ENCODE measurements at regions of chr13 and their contacts with region 1.

Region 1: GRCh38 chr13:97359181-97360057 is 74.5 kb upstream of the RAP2A start:
- DNase-seq: peak; percentile 87
- H3K4me3 Mint-ChIP-seq: no peak overlapping the region
- H3K27ac Mint-ChIP-seq: peak overlapping the region; percentile 49
- H3K4me1 Mint-ChIP-seq: no peaks in the 10 kb centered on the region
- H3K27me3 Mint-ChIP-seq: no peaks in the 10 kb centered on the region
- CTCF ChIP-seq: peak; percentile 96

Region 2: DNA sequence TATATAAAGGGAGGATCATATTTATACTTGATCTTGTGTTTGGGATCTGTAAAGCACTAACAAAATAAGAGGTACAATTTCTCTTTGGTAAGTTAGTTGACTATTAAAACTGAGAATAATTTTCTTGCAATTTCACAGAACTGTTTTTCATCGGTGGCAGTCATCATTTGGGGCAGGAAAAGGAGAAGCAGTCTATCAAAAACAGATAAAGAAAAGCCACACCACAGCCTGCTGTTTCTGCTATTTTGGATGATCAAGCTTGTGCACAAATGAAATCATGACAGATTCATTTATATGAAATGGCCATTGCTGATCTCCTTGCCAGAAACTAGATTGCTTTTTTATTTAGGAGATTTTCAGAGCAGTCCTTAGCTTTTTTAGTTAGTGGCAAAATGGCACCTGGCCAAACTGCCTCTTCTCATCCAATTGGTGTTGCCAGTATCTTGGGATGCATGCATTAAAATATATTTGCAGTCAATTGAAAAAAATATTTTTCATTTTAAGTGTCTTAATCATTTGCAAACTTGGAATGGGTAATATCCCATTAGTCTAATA is 943.5 kb before region 1 on chr13:
- CTCF ChIA-PET with region 1: no interaction called
- POLR2A ChIA-PET with region 1: no interaction called
- intact Hi-C with region 1: no loop called
- DNase-seq: no peak
- H3K4me3 Mint-ChIP-seq: no peak overlapping the region
- H3K27ac Mint-ChIP-seq: no peak overlapping the region
- H3K4me1 Mint-ChIP-seq: no peaks in the 10 kb centered on the region
- H3K27me3 Mint-ChIP-seq: no peaks in the 10 kb centered on the region
- CTCF ChIP-seq: no peak

Region 3: GRCh38 chr13:97030705-97031452 is 328.5 kb before region 1 on chr13:
- CTCF ChIA-PET with region 1: interaction called, 3 read pairs
- POLR2A ChIA-PET with region 1: no interaction called
- intact Hi-C with region 1: loop called (anchors 1 kb)
- DNase-seq: peak; percentile 51
- H3K4me3 Mint-ChIP-seq: no peak overlapping the region
- H3K27ac Mint-ChIP-seq: no peak overlapping the region
- H3K4me1 Mint-ChIP-seq: peaks cover 5% of the 10 kb centered on the region
- H3K27me3 Mint-ChIP-seq: no peaks in the 10 kb centered on the region
- CTCF ChIP-seq: peak; percentile 38

Region 4: GRCh38 chr13:97141564-97142005 is 217.8 kb before region 1 on chr13:
- CTCF ChIA-PET with region 1: interaction called, 10 read pairs
- POLR2A ChIA-PET with region 1: no interaction called
- intact Hi-C with region 1: no loop called
- DNase-seq: peak; percentile 96
- H3K4me3 Mint-ChIP-seq: no peak overlapping the region
- H3K27ac Mint-ChIP-seq: peak overlapping the region; percentile 18
- H3K4me1 Mint-ChIP-seq: peaks cover 8% of the 10 kb centered on the region
- H3K27me3 Mint-ChIP-seq: peaks cover under 1% of the 10 kb centered on the region
- CTCF ChIP-seq: no peak

Region 5: GRCh38 chr13:97284558-97284957 is 74.9 kb before region 1 on chr13:
- CTCF ChIA-PET with region 1: no interaction called
- POLR2A ChIA-PET with region 1: no interaction called
- intact Hi-C with region 1: no loop called
- DNase-seq: peak; percentile 44
- H3K4me3 Mint-ChIP-seq: no peak overlapping the region
- H3K27ac Mint-ChIP-seq: no peak overlapping the region
- H3K4me1 Mint-ChIP-seq: peaks cover 48% of the 10 kb centered on the region
- H3K27me3 Mint-ChIP-seq: no peaks in the 10 kb centered on the region
- CTCF ChIP-seq: no peak

Region 6: DNA sequence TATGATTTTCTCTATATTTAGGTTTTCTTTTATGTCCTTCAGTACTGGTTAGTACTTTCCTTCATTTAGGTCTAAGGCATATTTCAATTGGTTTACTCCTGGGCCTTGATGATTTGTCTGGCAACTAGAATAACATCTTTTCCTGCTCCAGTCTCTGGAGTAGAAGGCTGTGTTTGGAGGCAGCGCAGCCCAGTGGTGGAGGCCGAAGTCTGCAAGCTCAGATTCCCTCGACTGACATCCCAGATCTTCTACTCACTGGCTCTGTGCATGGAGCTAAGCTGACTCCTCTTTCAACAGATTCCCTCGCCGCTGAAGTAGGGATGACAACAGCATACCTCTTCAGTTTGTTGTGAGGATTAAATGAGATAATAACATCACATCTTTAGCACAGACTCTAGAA is 215.5 kb after region 1 on chr13:
- CTCF ChIA-PET with region 1: no interaction called
- POLR2A ChIA-PET with region 1: no interaction called
- intact Hi-C with region 1: loop called (anchors 10 kb)
- DNase-seq: peak; percentile 65
- H3K4me3 Mint-ChIP-seq: no peak overlapping the region
- H3K27ac Mint-ChIP-seq: no peak overlapping the region
- H3K4me1 Mint-ChIP-seq: no peaks in the 10 kb centered on the region
- H3K27me3 Mint-ChIP-seq: no peaks in the 10 kb centered on the region
- CTCF ChIP-seq: peak; percentile 16

Region 7: GRCh38 chr13:97967948-97968347 is 608.5 kb after region 1 on chr13:
- CTCF ChIA-PET with region 1: no interaction called
- POLR2A ChIA-PET with region 1: no interaction called
- intact Hi-C with region 1: no loop called
- DNase-seq: no peak
- H3K4me3 Mint-ChIP-seq: no peak overlapping the region
- H3K27ac Mint-ChIP-seq: no peak overlapping the region
- H3K4me1 Mint-ChIP-seq: no peaks in the 10 kb centered on the region
- H3K27me3 Mint-ChIP-seq: no peaks in the 10 kb centered on the region
- CTCF ChIP-seq: no peak